A549 (cell line): ENCODE measurements at regions of chr4 and their contacts with region 1.

Region 1: DNA sequence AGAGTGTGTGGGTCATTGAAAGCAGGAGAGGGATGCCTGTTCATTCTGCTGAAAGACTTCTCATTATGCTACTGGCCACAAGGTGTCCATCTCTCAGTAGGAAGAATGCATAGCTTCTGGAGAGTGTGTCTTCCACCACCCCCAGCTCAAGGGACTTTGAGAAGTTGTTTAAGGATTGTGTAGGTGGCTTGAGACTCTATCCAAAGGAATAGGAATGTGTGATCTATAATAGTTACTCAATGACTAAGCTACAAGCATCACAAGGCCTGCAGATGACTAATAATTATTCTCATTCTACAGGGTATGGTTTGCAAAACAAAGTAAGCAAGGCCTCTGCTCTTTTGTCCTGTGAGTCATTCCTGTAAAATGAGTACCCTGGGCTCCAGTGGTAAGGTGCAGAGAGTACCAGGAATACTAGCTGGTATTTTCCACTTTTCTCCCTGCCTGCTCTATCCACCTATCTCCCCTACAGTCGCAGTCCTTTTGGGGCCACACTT is 279.8 kb upstream of the BOD1L1 start:
- DNase-seq: peak; percentile 80 to 96
- ATAC-seq: peak; percentile 99
- H3K4me3 ChIP-seq: no peak overlapping the region
- H3K27ac ChIP-seq: peak overlapping the region; percentile 97
- H3K4me1 ChIP-seq: peaks cover 29% of the 10 kb centered on the region
- CTCF ChIP-seq: peak; percentile 57
- EP300 ChIP-seq: peak; percentile 94 to 95
- POLR2A ChIP-seq: no peak
- RAD21 ChIP-seq: peak; percentile 80 to 93

Region 2: DNA sequence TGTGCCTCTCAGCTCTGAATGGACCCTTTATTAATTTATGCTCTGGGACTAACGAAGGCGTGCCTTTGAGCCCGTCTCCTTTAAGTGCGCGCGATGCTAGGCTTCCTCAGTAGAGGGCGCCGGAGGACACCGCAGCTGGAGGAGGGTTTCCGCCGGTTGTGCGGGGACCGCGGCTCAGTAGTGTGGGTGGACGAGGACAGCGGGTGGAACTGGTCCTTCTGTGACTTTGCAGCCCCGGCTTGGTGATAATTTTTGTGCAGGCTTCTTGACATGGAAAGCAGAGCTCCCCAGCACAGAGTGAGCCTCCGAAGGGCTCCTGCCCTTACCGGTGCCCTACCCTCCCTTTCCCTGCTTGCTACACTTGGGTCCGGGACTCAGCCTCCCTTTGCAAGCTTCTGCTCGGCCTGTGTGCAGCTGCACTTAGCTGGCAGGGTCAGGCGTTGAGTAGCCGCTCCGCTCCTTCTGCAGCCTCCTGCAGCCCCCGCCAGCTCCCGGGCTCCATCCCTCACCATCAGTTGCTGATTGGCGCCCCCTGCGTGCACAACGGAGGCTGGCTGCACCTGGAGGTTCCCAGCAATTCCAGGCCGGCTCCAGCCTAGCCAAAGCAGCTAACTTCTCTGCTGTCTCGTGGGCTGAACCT is 253.0 kb before region 1 on chr4:
- CTCF ChIA-PET with region 1: interaction called, 29 read pairs
- POLR2A ChIA-PET with region 1: no interaction called
- DNase-seq: peak; percentile 18 to 57
- ATAC-seq: peak; percentile 95
- H3K4me3 ChIP-seq: peak overlapping the region; percentile 53
- H3K27ac ChIP-seq: peak overlapping the region; percentile 83 to 91
- H3K4me1 ChIP-seq: peaks cover 19% of the 10 kb centered on the region; the same call in 2 of the 3 replicates
- CTCF ChIP-seq: peak; percentile 36; the same call in 2 of the 3 replicates
- EP300 ChIP-seq: no peak
- POLR2A ChIP-seq: no peak
- RAD21 ChIP-seq: peak; percentile 47 to 54; a peak in 4 of 5 replicates

Region 3: DNA sequence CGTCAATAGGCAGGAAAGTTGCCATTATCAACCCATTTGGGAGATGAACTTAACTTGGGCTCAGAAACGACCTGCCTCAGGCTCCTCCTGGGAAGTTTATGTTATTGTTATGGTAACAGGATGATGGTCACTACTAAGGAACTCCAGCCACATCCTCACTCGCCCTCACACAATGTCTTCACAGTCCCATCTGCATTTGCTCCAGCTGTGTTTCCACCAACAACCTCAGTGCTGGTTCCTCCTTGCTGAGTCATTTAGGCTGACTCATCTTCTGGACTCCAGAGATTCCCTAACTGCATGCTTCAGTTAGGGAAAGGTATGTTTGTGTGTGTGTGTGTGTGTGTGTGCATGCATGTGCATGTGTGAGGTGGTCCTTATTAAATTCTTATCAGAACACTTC is 13.6 kb after region 1 on chr4:
- CTCF ChIA-PET with region 1: interaction called, 11 read pairs
- POLR2A ChIA-PET with region 1: interaction called, 5 read pairs
- DNase-seq: peak; percentile 70 to 93
- ATAC-seq: peak; percentile 97 to 98
- H3K4me3 ChIP-seq: no peak overlapping the region
- H3K27ac ChIP-seq: peak overlapping the region; percentile 79 to 87
- H3K4me1 ChIP-seq: peaks cover 31% of the 10 kb centered on the region
- CTCF ChIP-seq: no peak
- EP300 ChIP-seq: peak in 1 of 2 experiments; percentile 48; a peak in 2 of 5 replicates
- POLR2A ChIP-seq: no peak
- RAD21 ChIP-seq: peak; percentile 16 to 24; a peak in 1 of 5 replicates

Region 4: DNA sequence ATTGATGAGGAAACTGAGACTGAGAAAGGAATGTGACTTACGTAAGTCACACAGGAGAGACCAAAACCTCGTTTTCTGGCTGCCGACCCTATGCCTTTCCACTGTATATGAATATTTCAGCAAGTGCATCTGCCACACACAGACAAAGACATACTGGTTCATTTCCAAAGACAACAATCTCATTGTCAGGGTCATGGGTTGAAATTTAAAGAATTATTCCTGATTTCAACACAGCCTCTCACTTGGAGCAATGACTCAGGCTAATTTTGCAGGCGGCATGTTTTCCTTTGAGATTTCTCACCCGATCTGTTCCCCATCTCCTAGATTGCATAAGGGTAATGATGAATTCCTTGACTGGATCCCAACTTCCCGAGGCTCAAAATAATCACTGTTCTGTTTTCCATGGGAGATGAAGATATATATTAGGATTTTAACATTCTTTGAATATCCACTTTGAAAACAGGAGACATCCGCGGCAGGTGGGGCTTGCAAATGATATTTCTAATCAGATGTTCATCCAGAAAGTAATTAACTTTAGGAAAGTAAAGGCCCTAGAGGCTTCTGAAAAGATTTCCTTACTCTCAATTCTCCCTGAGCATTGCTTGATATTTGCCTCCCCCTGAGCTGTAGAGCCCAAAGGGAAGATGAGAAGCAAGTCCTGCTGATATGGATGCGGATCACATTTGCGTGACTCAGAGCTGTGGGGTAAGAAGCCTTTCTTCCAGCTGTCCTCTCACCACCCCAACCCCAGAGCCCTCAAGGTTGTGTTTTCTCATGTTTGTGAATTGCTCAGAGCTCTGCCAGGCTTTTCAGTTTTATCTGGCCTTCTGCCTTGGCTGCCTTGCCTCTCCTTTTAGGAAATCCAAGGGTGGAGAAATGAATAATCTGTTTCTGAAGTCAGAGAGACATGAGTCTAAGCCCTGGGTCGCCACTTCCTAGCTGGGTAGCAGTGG is 81.3 kb after region 1 on chr4:
- CTCF ChIA-PET with region 1: interaction called, 4 read pairs
- POLR2A ChIA-PET with region 1: interaction called, 20 read pairs
- DNase-seq: peak; percentile 35 to 91
- ATAC-seq: peak; percentile 92 to 93
- H3K4me3 ChIP-seq: peak overlapping the region; percentile 19; the same call in 1 of the 3 replicates
- H3K27ac ChIP-seq: peak overlapping the region; percentile 97 to 98
- H3K4me1 ChIP-seq: peaks cover 70% of the 10 kb centered on the region
- CTCF ChIP-seq: no peak
- EP300 ChIP-seq: peak; percentile 96 to 97
- POLR2A ChIP-seq: no peak
- RAD21 ChIP-seq: peak; percentile 24 to 71

Region 5: DNA sequence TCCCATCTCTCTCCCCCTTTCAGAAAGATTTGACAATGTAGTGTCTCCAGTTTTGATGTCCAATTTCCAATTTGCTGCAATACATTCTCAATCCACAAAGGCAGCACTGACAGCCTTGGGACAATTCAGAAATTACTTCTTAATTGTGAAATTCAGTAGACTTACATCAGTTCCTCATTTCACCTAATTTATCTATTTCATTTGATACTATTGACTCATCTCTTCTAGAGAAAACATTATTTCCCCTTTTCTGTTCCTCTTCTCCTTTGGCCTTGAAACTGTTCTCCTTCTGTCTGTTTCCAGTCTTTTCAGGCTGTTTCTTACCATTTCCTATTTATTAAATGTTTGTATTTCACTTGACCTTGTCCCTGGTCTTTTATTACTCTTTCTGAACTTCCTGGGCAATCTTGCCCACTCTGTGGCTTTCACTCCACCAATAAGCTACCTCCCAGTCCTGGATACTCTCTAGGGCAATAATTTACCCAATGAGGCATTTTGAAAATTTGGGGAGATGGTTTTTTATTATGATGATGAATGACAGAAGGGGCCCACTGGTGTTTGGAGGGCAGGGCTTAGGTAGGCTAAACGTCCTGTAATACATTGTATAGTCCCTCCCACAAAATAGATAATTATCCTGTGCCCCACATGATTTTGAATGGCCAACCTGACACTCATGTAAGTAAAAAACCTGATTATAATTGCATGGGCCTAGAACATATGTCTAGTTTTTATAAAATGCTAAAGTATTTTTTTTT is 218.2 kb after region 1 on chr4:
- CTCF ChIA-PET with region 1: no interaction called
- POLR2A ChIA-PET with region 1: no interaction called
- DNase-seq: no peak
- ATAC-seq: no peak
- H3K4me3 ChIP-seq: no peak overlapping the region
- H3K27ac ChIP-seq: no peak overlapping the region
- H3K4me1 ChIP-seq: no peaks in the 10 kb centered on the region
- CTCF ChIP-seq: no peak
- EP300 ChIP-seq: no peak
- POLR2A ChIP-seq: no peak
- RAD21 ChIP-seq: no peak

Region 6: GRCh38 chr4:14193601-14194000 is 286.3 kb after region 1 on chr4:
- CTCF ChIA-PET with region 1: no interaction called
- POLR2A ChIA-PET with region 1: no interaction called
- DNase-seq: no peak
- ATAC-seq: no peak
- H3K4me3 ChIP-seq: no peak overlapping the region
- H3K27ac ChIP-seq: peak overlapping the region in 1 of 2 experiments; percentile 9; a peak in 1 of 6 replicates
- H3K4me1 ChIP-seq: peaks cover 6% of the 10 kb centered on the region; the same call in 2 of the 3 replicates
- CTCF ChIP-seq: no peak
- EP300 ChIP-seq: no peak
- POLR2A ChIP-seq: no peak
- RAD21 ChIP-seq: no peak

Region 7: GRCh38 chr4:15001869-15002658 is 1094.8 kb after region 1 on chr4 and contains the start of gene CPEB2:
- CTCF ChIA-PET with region 1: interaction called, 6 read pairs
- POLR2A ChIA-PET with region 1: interaction called, 10 read pairs
- DNase-seq: peak; percentile 56 to 95
- ATAC-seq: peak; percentile 69 to 85
- H3K4me3 ChIP-seq: peak within 1 kb of the TSS; percentile 71
- H3K27ac ChIP-seq: peak within 1 kb of the TSS; percentile 93 to 100
- H3K4me1 ChIP-seq: peaks cover 13% of the 10 kb centered on the region; the same call in 2 of the 3 replicates
- CTCF ChIP-seq: no peak
- EP300 ChIP-seq: peak; percentile 16 to 60; a peak in 2 of 5 replicates
- POLR2A ChIP-seq: peak; percentile 93
- RAD21 ChIP-seq: peak in 1 of 2 experiments; percentile 22; a peak in 1 of 5 replicates
- polyA plus RNA-seq, gene CPEB2: 16.8 and 24.3 TPM in 2 replicates